ENCODE measurements at regions of chr5 and their contacts with region 1.

Region 1: DNA sequence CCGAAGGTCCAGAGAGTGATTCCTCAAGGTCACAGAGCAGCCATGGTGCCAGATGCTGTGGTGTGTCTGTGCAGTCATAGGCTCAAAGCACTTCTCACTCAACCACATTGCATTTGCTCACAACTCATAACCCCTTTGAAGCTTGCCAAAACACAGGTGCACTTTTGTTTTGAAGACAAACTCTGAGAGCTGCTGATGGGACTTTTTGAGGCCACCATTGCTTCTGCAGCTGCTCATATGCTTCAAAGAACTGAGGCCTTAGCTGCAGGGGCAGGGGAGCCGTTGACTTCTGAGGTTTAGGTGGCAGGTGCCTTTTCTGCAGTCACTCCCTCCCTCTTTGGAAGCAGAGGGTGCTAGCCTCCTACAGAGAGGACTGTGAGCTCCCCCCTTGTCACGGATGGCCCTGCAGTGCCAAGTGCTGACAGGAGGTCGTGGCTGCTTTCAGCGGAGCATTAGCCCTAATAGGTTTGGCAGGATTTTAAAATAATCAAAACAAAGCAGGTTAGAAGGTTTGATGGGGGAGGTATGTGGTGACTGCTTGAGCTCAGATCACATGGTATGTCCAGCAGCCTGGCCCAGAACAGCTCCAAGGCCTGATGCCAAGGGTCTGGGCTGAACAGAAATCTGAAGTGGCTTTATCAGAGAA is 232.1 kb downstream of the MAN2A1 start:
- DNase-seq: peak; percentile 13 to 90 (median 84)
- ATAC-seq: peak; percentile 92
- H3K4me3 ChIP-seq: peak overlapping the region; percentile 1
- H3K4me3 Mint-ChIP-seq: peak overlapping the region; percentile 75 to 91 (median 82)
- H3K27ac ChIP-seq: peak overlapping the region; percentile 78
- H3K27ac Mint-ChIP-seq: peak overlapping the region; percentile 89 to 100 (median 97)
- H3K4me1 ChIP-seq: peaks cover 34 to 45% of the 10 kb centered on the region in 2 donors
- H3K4me1 Mint-ChIP-seq: peaks cover 17 to 76% (median 62%) of the 10 kb centered on the region in 7 donors
- H3K27me3 ChIP-seq: no peaks in the 10 kb centered on the region
- H3K27me3 Mint-ChIP-seq: no peaks in the 10 kb centered on the region

Region 2: DNA sequence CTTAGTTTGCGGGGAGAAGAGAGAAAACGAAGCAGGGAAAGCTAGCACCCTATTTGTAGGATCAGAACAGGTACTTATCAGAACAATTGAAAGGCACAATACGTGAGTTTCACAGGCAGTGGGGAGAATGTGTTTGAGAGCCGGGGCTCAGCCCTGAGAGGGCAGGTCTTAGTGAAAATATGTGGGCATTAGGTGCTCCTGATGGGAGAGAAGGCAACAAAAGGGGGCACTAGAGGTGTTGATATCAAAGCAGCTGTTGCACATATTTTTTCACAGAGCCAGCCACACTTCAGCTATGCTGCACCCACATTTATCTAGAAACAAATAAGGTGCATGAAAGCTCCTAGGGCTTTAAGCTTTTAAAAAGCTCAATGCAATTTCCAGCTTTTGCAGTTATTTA is 331.9 kb before region 1 on chr5:
- CTCF ChIA-PET with region 1: no interaction called
- POLR2A ChIA-PET with region 1: no interaction called
- intact Hi-C with region 1: loop called in 1 of 2 experiments (anchors 10 kb)
- DNase-seq: peak in 5 of 9 donors; percentile 7 to 39 (median 12)
- ATAC-seq: peak; percentile 54
- H3K4me3 ChIP-seq: no peak overlapping the region
- H3K4me3 Mint-ChIP-seq: no peak overlapping the region
- H3K27ac ChIP-seq: no peak overlapping the region
- H3K27ac Mint-ChIP-seq: peak overlapping the region in 2 of 9 donors; percentile 38 to 47
- H3K4me1 ChIP-seq: no peaks in the 10 kb centered on the region
- H3K4me1 Mint-ChIP-seq: peaks cover 0 to 16% (median 10%) of the 10 kb centered on the region in 7 donors
- H3K27me3 ChIP-seq: no peaks in the 10 kb centered on the region
- H3K27me3 Mint-ChIP-seq: peaks cover 0 to 2% (median 0%) of the 10 kb centered on the region in 5 donors

Region 3: GRCh38 chr5:109876941-109877650 is 44.8 kb before region 1 on chr5:
- CTCF ChIA-PET with region 1: no interaction called
- POLR2A ChIA-PET with region 1: interaction called, 5 read pairs
- intact Hi-C with region 1: loop called in 1 of 2 experiments (anchors 2 kb)
- DNase-seq: no peak
- ATAC-seq: no peak
- H3K4me3 ChIP-seq: no peak overlapping the region
- H3K4me3 Mint-ChIP-seq: peak overlapping the region in 1 of 10 donors; percentile 75
- H3K27ac ChIP-seq: no peak overlapping the region
- H3K27ac Mint-ChIP-seq: peak overlapping the region in 2 of 9 donors; percentile 42 to 76
- H3K4me1 ChIP-seq: peaks cover 0 to 17% of the 10 kb centered on the region in 2 donors
- H3K4me1 Mint-ChIP-seq: peaks cover 17 to 61% (median 45%) of the 10 kb centered on the region in 7 donors
- H3K27me3 ChIP-seq: no peaks in the 10 kb centered on the region
- H3K27me3 Mint-ChIP-seq: no peaks in the 10 kb centered on the region

Region 4: GRCh38 chr5:109945097-109945678 is 23.3 kb after region 1 on chr5:
- CTCF ChIA-PET with region 1: no interaction called
- POLR2A ChIA-PET with region 1: no interaction called
- intact Hi-C with region 1: loop called in 1 of 2 experiments (anchors 2 kb)
- DNase-seq: peak in 1 of 9 donors; percentile 14
- ATAC-seq: peak; percentile 41
- H3K4me3 ChIP-seq: no peak overlapping the region
- H3K4me3 Mint-ChIP-seq: peak overlapping the region in 7 of 10 donors; percentile 2 to 42 (median 10)
- H3K27ac ChIP-seq: no peak overlapping the region
- H3K27ac Mint-ChIP-seq: peak overlapping the region in 3 of 9 donors; percentile 7 to 61 (median 15)
- H3K4me1 ChIP-seq: peaks cover 0 to 12% of the 10 kb centered on the region in 2 donors
- H3K4me1 Mint-ChIP-seq: peaks cover 10 to 39% (median 23%) of the 10 kb centered on the region in 7 donors
- H3K27me3 ChIP-seq: no peaks in the 10 kb centered on the region
- H3K27me3 Mint-ChIP-seq: peaks cover 0 to 6% (median 0%) of the 10 kb centered on the region in 5 donors

Region 5: DNA sequence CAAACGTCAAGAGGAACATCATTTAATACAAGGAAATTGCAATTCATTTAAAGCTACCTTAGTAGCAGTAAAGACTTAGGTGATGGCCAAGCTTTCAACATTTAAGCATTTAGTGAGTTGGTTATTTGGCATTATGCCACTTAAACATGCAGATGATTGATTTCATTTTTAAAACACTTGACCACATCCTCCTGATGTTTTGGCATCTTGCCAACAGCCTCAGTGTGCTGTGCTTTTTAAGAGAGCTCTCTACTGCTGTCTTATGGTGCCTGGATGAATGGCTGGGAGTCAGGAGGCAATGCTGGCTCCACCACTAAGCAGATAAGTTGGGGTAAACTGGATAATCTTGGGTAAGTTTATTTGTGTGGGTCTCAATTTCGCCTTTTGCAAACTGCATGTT is 132.4 kb after region 1 on chr5:
- CTCF ChIA-PET with region 1: interaction called, 19 read pairs
- POLR2A ChIA-PET with region 1: interaction called, 18 read pairs
- intact Hi-C with region 1: loop called (anchors 1 kb)
- DNase-seq: peak; percentile 17 to 93 (median 85)
- ATAC-seq: peak; percentile 89
- H3K4me3 ChIP-seq: peak overlapping the region; percentile 6
- H3K4me3 Mint-ChIP-seq: peak overlapping the region; percentile 50 to 86 (median 65)
- H3K27ac ChIP-seq: peak overlapping the region; percentile 63
- H3K27ac Mint-ChIP-seq: peak overlapping the region; percentile 77 to 96 (median 90)
- H3K4me1 ChIP-seq: peaks cover 21 to 35% of the 10 kb centered on the region in 2 donors
- H3K4me1 Mint-ChIP-seq: peaks cover 10 to 50% (median 35%) of the 10 kb centered on the region in 7 donors
- H3K27me3 ChIP-seq: no peaks in the 10 kb centered on the region
- H3K27me3 Mint-ChIP-seq: no peaks in the 10 kb centered on the region

Measured in naive thymus-derived CD4-positive, alpha-beta T cell (primary cell).